ENCODE measurements at regions of chr1 and their contacts with region 1.

Region 1: DNA sequence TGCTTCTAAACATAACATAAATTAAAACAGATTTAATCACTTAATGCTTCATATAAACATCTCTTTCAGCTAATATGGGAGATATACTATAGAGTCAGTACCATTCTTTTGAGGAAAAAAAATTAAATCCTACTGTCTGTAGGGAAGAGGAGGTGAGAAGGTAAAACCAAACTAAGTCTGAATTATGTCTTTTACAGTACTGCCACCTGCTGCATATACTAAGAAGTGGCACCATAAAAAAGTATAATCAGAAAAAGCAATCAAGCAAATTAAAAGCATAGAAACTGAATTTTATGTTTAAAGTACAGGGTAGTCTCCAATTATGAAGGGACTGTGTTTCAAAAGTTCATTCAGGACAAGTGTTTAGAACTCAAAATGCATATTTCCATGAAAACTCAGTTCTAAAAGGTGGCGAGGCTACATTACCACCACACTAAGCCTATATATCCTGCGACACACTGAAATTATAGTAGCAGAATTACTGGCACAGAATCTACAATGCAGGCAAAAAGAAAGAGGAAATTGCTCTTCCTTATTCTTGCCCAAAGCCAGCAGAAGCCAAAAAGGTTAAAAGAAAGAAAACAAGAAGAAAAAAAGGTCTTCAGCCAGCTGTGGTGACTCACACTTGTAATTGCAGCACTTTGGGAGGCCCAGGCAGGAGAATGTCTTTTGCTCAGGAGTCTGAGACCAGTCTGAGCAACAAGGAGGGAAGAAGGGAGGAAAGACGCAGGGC is 9.0 kb downstream of the NSL1 start:
- DNase-seq: peak; percentile 58
- H3K4me3 Mint-ChIP-seq: no peak overlapping the region
- H3K27ac Mint-ChIP-seq: peak overlapping the region; percentile 57
- H3K4me1 Mint-ChIP-seq: peaks cover 7% of the 10 kb centered on the region
- H3K27me3 Mint-ChIP-seq: no peaks in the 10 kb centered on the region
- CTCF ChIP-seq: peak; percentile 84

Region 2: GRCh38 chr1:212469701-212470458 is 312.7 kb before region 1 on chr1:
- CTCF ChIA-PET with region 1: interaction called, 55 read pairs
- POLR2A ChIA-PET with region 1: interaction called, 6 read pairs
- intact Hi-C with region 1: no loop called
- DNase-seq: peak; percentile 96
- H3K4me3 Mint-ChIP-seq: peak overlapping the region; percentile 49
- H3K27ac Mint-ChIP-seq: peak overlapping the region; percentile 90
- H3K4me1 Mint-ChIP-seq: peaks cover 10% of the 10 kb centered on the region
- H3K27me3 Mint-ChIP-seq: no peaks in the 10 kb centered on the region
- CTCF ChIP-seq: no peak

Region 3: DNA sequence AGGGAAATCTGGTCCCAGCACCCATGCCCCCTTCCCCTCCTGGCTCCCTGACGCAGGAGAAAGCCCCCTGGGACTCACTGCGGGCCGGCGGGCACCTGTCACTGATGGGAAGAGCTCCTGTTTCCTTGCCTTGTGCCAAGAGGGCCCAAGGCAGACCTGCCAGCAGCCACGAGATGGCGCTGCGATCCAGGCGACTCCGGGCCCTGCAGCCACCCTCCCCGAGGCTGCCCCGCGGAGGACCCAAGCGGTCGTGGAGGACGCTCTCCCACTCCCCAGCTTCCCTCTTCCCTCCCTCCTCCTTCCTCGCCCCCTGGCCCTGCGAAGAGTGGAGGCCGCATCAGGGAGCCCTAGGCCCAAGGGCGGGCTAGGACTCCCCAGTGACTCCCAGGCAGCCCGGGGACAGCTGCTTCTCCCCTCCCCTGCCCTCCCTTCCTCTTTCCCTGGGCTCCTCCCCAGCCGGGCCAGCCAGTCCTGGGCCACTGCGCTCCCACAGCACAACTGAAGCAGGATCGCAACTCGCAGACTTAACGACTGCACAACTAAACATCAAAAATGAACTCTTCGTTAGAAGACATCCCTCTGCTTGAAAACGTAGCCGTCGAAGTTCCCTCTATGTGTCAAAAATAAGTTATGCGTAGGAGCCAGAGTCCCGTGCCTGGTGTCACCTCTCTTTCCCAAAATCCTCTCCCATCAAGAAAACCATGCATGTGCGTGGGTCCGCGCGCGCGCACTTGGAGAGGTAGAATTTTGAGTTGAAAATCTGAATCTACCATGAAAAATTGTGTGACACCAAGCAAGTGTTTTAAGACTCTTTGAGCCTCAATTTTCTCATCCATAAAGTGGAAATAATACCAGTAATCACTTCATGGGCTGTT is 117.1 kb before region 1 on chr1:
- CTCF ChIA-PET with region 1: interaction called, 3 read pairs
- POLR2A ChIA-PET with region 1: no interaction called
- intact Hi-C with region 1: loop called (anchors 1 kb)
- DNase-seq: peak; percentile 56
- H3K4me3 Mint-ChIP-seq: no peak overlapping the region
- H3K27ac Mint-ChIP-seq: peak overlapping the region; percentile 62
- H3K4me1 Mint-ChIP-seq: peaks cover 16% of the 10 kb centered on the region
- H3K27me3 Mint-ChIP-seq: peaks cover 21% of the 10 kb centered on the region
- CTCF ChIP-seq: peak; percentile 75

Region 4: DNA sequence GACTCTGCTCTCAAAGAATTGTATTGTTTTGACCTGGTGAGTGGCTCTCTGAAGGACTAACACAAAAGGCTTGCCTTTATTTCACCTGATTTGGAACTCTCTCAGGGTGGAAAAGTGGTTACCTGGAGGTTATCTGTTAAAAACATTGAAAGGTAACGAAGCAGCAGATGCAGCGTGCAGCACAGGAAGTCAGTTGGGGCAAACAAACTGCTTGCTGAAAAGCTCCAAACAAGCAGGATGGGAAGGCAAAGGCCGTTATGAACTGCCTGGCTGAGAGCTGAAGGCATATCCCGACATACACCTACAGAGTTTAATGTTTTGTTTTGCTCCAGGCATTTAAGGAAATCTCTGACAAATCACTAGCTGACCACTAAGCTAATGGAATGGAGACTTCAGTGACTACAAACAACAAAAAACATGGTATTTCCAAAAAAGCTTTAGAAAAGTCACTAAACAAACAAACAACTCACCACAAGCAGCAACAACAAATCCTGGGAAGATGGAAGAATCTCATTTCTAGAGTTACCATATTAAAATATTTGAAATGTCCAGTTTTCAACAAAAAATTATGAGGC is 38.6 kb before region 1 on chr1:
- CTCF ChIA-PET with region 1: interaction called, 23 read pairs
- POLR2A ChIA-PET with region 1: interaction called, 3 read pairs
- intact Hi-C with region 1: no loop called
- DNase-seq: no peak
- H3K4me3 Mint-ChIP-seq: no peak overlapping the region
- H3K27ac Mint-ChIP-seq: no peak overlapping the region
- H3K4me1 Mint-ChIP-seq: no peaks in the 10 kb centered on the region
- H3K27me3 Mint-ChIP-seq: no peaks in the 10 kb centered on the region
- CTCF ChIP-seq: no peak

Region 5: GRCh38 chr1:212760126-212760823 is 22.3 kb before region 1 on chr1:
- CTCF ChIA-PET with region 1: interaction called, 16 read pairs
- POLR2A ChIA-PET with region 1: no interaction called
- intact Hi-C with region 1: no loop called
- DNase-seq: peak; percentile 57
- H3K4me3 Mint-ChIP-seq: no peak overlapping the region
- H3K27ac Mint-ChIP-seq: no peak overlapping the region
- H3K4me1 Mint-ChIP-seq: no peaks in the 10 kb centered on the region
- H3K27me3 Mint-ChIP-seq: no peaks in the 10 kb centered on the region
- CTCF ChIP-seq: peak; percentile 82

Measured in MCF 10A (cell line).